Activated CD4-positive, alpha-beta T cell treated with anti-CD3 and anti-CD28 coated beads for 36 hours (primary cell): ENCODE measurements at regions of chr11 and their contacts with region 1.

Region 1: DNA sequence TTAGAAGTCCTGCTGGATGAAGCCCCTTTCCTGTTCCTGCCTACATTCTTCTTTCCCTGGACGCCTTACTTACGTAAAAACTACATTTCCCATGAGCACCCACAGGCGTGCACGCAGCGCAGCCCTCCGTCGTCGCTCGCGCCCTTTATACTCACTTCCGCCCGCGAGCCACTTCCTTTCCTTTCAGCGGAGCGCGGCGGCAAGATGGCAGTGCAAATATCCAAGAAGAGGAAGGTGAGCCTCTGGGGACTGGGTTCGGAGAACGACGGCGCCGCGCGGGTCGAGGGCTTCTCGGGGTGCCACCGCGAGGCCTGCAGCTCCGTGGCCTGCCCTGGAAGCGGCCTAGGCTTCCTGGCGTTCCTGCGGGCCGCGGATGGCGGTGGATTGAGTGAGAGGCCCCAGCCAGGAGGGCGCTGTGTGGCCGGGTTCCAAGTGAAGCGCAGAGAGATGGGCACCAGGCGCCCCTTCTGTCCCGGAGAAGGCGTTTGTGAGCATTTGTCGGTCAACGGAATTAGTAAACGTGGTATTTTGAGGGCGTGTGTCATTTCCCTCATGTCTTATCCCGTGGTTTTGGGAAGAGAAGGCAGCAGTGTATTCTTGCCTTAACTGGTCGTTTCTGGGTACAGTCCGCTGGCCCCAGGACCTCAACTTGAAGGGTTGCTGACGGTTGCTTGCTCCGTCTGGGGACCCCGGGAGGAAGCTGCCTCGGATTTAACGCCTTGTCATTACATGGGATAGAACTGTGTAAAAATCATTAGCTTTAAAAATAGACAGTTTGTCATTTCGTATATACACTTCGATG is at the start of gene RPS3:
- DNase-seq: peak; percentile 94
- ATAC-seq: peak; percentile 92
- H3K4me3 Mint-ChIP-seq: peak within 1 kb of the TSS; percentile 96
- H3K27ac Mint-ChIP-seq: peak within 1 kb of the TSS; percentile 98
- H3K4me1 Mint-ChIP-seq: peaks cover 41% of the 10 kb centered on the region
- H3K27me3 Mint-ChIP-seq: no peaks in the 10 kb centered on the region
- total RNA-seq, gene RPS3: 4,536 to 4,569 TPM

Region 2: DNA sequence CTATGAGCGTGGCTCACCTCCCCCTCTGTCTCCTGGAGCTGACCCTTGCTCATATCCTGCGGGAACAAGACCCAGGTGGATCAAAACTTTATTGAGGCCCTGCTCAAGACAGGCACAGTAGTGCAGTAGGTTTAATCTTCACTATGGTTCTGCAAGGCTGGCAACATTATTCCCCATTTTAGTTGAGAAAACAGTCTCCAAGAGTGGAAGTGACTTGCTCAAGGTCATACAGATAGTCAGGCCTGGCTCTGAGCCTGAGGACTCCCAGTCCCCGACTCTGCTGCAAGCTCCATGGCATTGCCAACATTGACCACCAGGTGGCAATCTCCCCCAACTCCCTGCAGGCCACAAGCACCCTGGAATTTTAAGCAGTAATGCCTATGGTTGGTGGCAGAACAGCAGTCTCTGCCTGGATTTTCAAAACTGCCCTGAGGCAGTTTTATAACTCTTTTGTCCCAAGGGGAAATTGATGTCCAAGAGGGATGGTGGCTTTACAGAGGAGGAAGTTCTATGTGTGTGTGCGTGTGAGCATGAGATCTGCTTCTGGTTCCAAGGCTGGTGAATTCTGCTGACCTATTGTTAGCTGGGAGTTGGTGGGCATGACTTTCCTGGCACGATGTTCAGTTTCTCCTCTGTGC is 376.7 kb before region 1 on chr11:
- CTCF ChIA-PET with region 1: no interaction called
- POLR2A ChIA-PET with region 1: no interaction called
- intact Hi-C with region 1: no loop called
- DNase-seq: peak; percentile 86
- ATAC-seq: peak; percentile 91
- H3K4me3 Mint-ChIP-seq: no peak overlapping the region
- H3K27ac Mint-ChIP-seq: no peak overlapping the region
- H3K4me1 Mint-ChIP-seq: no peaks in the 10 kb centered on the region
- H3K27me3 Mint-ChIP-seq: no peaks in the 10 kb centered on the region

Region 3: DNA sequence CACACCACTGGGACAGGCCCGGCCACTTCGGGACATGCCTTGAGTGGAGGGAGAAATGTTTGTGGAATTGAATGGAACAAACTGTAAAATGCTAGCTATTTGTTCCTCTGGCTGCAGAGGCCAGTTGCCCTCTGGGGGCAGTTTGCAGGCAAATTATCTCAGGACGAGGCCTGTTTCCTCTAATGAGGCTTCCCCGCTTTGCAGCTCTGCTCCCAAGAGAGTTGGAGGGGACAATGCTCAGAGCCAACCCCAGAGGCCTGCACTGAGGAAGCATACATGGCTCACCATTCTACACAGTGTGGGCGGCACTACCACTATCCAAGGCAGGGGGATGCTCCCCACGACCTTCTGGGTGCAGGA is 59.5 kb before region 1 on chr11:
- CTCF ChIA-PET with region 1: no interaction called
- POLR2A ChIA-PET with region 1: no interaction called
- intact Hi-C with region 1: no loop called
- DNase-seq: no peak
- ATAC-seq: peak; percentile 6
- H3K4me3 Mint-ChIP-seq: no peak overlapping the region
- H3K27ac Mint-ChIP-seq: peak overlapping the region; percentile 83
- H3K4me1 Mint-ChIP-seq: peaks cover 95% of the 10 kb centered on the region
- H3K27me3 Mint-ChIP-seq: no peaks in the 10 kb centered on the region

Region 4: GRCh38 chr11:75429902-75430719 is 30.6 kb after region 1 on chr11:
- CTCF ChIA-PET with region 1: interaction called, 4 read pairs
- POLR2A ChIA-PET with region 1: interaction called, 5 read pairs
- intact Hi-C with region 1: loop called in 1 of 2 experiments (anchors 1 kb)
- DNase-seq: peak; percentile 77
- ATAC-seq: peak; percentile 65
- H3K4me3 Mint-ChIP-seq: peak overlapping the region; percentile 60
- H3K27ac Mint-ChIP-seq: no peak overlapping the region
- H3K4me1 Mint-ChIP-seq: peaks cover 16% of the 10 kb centered on the region
- H3K27me3 Mint-ChIP-seq: peaks cover 49% of the 10 kb centered on the region

Region 5: DNA sequence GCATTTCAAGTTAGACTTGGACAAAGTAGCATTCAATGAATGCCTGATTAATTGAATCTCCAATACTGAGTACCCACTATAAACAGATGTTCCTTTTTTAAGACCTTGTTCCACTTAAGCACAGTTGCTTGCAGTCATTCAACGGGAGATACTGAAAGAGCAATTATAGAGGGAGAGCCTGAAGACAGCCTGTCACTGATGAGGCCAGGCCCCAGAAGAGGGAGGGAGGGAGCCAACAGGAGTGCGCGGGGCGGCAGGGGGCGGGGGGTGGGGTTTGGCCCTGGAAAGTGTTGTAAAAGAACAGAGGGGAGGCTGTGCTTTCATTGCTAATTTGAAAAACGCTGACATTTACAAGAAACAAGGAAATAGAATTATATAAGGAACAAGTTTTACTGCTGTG is 216.2 kb after region 1 on chr11:
- CTCF ChIA-PET with region 1: no interaction called
- POLR2A ChIA-PET with region 1: no interaction called
- intact Hi-C with region 1: no loop called
- DNase-seq: no peak
- ATAC-seq: no peak
- H3K4me3 Mint-ChIP-seq: no peak overlapping the region
- H3K27ac Mint-ChIP-seq: no peak overlapping the region
- H3K4me1 Mint-ChIP-seq: no peaks in the 10 kb centered on the region
- H3K27me3 Mint-ChIP-seq: peaks cover 2% of the 10 kb centered on the region

Region 6: DNA sequence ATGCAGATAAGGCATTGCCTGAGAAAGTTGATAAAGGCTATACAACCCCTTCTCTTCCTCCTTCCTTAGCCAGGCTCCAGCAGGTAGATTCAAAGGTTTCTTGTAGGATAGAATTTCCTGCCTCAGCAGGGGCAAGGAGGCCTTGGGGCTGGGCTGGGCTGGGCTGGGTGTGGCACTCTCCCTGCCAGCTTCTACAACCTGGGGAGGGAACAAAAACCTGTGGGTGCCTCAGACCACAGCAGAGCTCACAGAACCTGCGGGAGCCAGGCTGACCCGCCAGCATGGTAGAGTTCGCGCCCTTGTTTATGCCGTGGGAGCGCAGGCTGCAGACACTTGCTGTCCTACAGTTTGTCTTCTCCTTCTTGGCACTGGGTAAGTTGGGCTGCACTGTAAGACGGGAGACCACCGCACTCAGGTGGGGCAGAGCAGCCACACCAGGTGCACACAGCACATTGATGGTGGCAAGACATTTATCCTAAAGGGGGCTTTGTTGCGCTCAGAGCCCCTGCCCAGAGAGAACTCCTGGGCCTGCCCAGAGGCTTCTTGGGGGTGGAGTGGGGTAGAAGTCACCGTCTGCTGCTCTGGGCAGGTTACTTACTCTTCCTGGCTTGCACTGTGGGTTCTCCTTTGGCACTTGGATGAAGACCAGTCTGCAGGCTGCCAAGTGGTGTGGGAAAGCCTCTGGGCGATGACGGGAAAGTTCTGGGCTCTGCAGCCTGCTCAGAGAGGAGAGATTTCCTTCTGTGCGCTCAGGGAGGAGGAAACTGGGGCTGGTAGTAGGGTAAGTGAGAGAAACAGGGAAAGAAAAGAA is 318.3 kb after region 1 on chr11 and contains the start of gene MOGAT2:
- CTCF ChIA-PET with region 1: no interaction called
- POLR2A ChIA-PET with region 1: no interaction called
- intact Hi-C with region 1: no loop called
- DNase-seq: no peak
- ATAC-seq: no peak
- H3K4me3 Mint-ChIP-seq: no peak within 1 kb of the TSS
- H3K27ac Mint-ChIP-seq: no peak within 1 kb of the TSS
- H3K4me1 Mint-ChIP-seq: no peaks in the 10 kb centered on the region
- H3K27me3 Mint-ChIP-seq: peaks cover 5% of the 10 kb centered on the region
- total RNA-seq, gene MOGAT2: not detected